ENCODE measurements at regions of chr14 and their contacts with region 1.

Region 1: DNA sequence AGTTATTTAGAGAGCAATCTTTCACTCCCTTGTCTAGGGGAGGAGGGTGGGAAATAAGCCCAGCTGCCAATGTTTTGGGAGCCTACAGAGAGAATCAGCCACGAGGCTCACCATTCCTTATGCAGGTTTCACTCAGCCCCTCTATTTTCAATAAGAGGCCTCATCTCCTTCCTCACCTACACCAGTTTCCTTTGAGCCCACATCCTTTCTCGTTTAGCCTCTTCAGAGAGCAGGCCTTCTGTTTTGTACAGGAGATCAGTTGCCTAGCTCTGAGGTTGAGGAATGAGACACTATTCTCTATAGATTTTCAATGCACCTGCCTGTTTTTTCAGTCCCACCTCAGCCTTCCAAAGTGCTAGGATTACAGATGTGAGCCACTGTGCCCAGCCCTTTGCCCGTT is 17.9 kb downstream of the SNAPC1 start:
- DNase-seq: no peak
- ATAC-seq: no peak
- H3K4me3 ChIP-seq: no peak overlapping the region
- H3K4me3 Mint-ChIP-seq: no peak overlapping the region
- H3K27ac ChIP-seq: no peak overlapping the region
- H3K27ac Mint-ChIP-seq: no peak overlapping the region
- H3K4me1 ChIP-seq: no peaks in the 10 kb centered on the region
- H3K4me1 Mint-ChIP-seq: no peaks in the 10 kb centered on the region
- H3K27me3 ChIP-seq: no peaks in the 10 kb centered on the region
- H3K27me3 Mint-ChIP-seq: no peaks in the 10 kb centered on the region
- CTCF ChIP-seq: no peak

Region 2: GRCh38 chr14:61598980-61599379 is 181.1 kb before region 1 on chr14:
- CTCF ChIA-PET with region 1: no interaction called
- POLR2A ChIA-PET with region 1: interaction called, 10 read pairs
- intact Hi-C with region 1: no loop called
- DNase-seq: peak; percentile 20
- ATAC-seq: peak; percentile 28
- H3K4me3 ChIP-seq: no peak overlapping the region
- H3K4me3 Mint-ChIP-seq: peak overlapping the region; percentile 21
- H3K27ac ChIP-seq: peak overlapping the region in 1 of 2 donors; percentile 20
- H3K27ac Mint-ChIP-seq: peak overlapping the region; percentile 55
- H3K4me1 ChIP-seq: peaks cover 22 to 25% of the 10 kb centered on the region in 2 donors
- H3K4me1 Mint-ChIP-seq: peaks cover 38% of the 10 kb centered on the region
- H3K27me3 ChIP-seq: no peaks in the 10 kb centered on the region
- H3K27me3 Mint-ChIP-seq: no peaks in the 10 kb centered on the region
- CTCF ChIP-seq: no peak

Measured in B cell (primary cell).